ENCODE measurements at regions of chr19 and their contacts with region 1.

Region 1: GRCh38 chr19:35264268-35265125 is 4.3 kb upstream of the USF2 start:
- DNase-seq: peak in 1 of 2 experiments; percentile 29
- H3K4me3 ChIP-seq: no peak overlapping the region
- H3K4me3 Mint-ChIP-seq: no peak overlapping the region
- H3K27ac Mint-ChIP-seq: peak overlapping the region; percentile 58
- H3K4me1 ChIP-seq: 0 out of 2 replicates have a peak, but pooled peaks cover 4% of the 10 kb centered on the region
- H3K4me1 Mint-ChIP-seq: no peaks in the 10 kb centered on the region
- H3K27me3 ChIP-seq: no peaks in the 10 kb centered on the region
- H3K27me3 Mint-ChIP-seq: no peaks in the 10 kb centered on the region
- CTCF ChIP-seq: no peak

Region 2: DNA sequence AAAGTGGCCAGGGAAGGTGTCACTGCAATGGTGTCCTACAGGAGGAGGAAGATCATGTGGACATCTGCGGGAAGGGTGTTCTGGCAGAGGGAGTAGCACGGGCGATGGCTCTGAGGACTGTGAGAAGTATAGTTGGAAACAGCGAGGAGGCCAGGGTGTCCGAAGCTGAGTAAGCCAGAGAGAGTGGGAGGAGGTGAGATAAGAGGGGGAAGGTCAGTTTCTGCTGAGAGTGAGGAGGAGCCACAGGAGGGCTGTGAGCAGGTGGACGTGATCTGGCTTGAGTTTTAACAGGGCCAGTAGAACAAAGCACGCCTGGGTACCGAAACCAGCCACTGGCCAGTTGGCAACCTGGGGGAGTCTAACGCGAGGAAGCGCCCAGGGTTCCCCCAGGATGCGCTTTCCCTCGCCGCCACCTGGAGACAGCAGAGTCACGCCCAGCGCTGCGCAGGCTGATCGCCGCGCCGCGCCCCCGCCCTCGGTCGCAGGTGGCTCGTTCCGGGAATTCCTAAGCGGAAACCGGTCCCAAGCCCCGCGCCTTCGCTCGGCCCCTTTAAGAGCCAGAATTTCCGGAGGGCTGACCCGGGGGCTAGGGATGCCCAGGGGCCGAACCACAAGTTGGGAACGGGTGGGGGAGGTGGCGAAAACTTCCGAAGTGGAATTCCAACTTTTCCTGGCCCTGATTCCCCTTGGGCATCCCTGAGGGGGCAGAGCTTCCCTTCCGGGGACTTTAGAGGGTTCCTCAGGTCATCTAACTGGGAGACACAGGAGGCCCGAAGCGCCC is 16.8 kb before region 1 on chr19:
- CTCF ChIA-PET with region 1: no interaction called
- POLR2A ChIA-PET with region 1: interaction called, 3 read pairs
- intact Hi-C with region 1: loop called (anchors 2 kb)
- DNase-seq: peak; percentile 97
- H3K4me3 ChIP-seq: peak overlapping the region; percentile 91
- H3K4me3 Mint-ChIP-seq: peak overlapping the region; percentile 86
- H3K27ac Mint-ChIP-seq: peak overlapping the region; percentile 94
- H3K4me1 ChIP-seq: peaks cover 11% of the 10 kb centered on the region
- H3K4me1 Mint-ChIP-seq: peaks cover 21% of the 10 kb centered on the region
- H3K27me3 ChIP-seq: no peaks in the 10 kb centered on the region
- H3K27me3 Mint-ChIP-seq: no peaks in the 10 kb centered on the region
- CTCF ChIP-seq: peak in 1 of 2 experiments; percentile 90